CD8-positive, alpha-beta T cell (primary cell): ENCODE measurements at regions of chr13 and their contacts with region 1.

Region 1: DNA sequence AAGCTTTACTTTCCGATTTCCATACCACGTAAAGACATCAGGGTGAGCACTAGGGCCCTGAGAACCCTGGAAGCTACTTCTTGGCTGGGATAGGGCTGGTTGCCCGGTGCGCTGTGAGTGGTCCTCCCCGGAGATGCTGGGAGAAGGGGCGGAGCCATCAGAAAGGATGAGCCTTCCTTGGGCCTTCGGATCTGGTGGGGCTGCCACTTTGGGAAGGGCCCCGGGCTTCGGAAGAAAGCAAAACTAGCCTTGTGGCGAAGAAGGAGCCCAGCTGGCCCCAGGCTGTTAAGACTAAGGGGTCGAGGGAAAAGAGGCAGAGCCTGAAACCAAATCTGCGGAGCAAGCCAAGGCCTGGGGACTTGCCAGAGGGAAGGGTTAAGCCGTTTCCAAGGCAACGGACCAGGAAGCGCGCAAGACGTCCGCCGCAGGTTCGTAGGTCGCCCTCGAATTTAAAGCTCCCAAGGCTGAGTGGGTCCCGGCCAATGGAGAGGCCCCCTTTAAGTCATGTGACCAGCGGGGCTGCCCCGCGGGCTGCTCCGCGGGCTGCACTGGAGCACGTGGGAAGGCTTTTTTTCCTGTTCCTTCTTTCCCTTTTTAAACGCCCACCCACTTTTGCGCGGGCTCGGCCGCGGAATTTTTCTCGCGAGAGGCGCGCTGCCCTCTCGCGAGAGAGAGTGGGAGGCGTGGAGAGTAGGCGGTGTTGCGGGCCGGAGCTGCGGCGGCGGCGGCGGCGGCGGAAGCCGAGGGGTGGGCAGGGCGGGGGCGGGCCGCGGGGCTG is 426 bp upstream of the AKAP11 start:
- DNase-seq: peak; percentile 83 to 99 (median 91)
- ATAC-seq: peak; percentile 86
- H3K4me3 ChIP-seq: peak overlapping the region; percentile 63 to 78
- H3K4me3 Mint-ChIP-seq: peak overlapping the region; percentile 97
- H3K27ac ChIP-seq: peak overlapping the region; percentile 89 to 94
- H3K27ac Mint-ChIP-seq: peak overlapping the region; percentile 96
- H3K4me1 ChIP-seq: peaks cover 31% of the 10 kb centered on the region
- H3K4me1 Mint-ChIP-seq: peaks cover 49% of the 10 kb centered on the region
- H3K27me3 ChIP-seq: no peaks in the 10 kb centered on the region
- H3K27me3 Mint-ChIP-seq: no peaks in the 10 kb centered on the region
- CTCF ChIP-seq: no peak

Region 2: GRCh38 chr13:40777166-40777808 is 1494.2 kb before region 1 on chr13:
- CTCF ChIA-PET with region 1: no interaction called
- POLR2A ChIA-PET with region 1: no interaction called
- intact Hi-C with region 1: loop called (anchors 5 to 10 kb)
- DNase-seq: peak in 8 of 9 experiments; percentile 18 to 77 (median 36)
- ATAC-seq: no peak
- H3K4me3 ChIP-seq: peak overlapping the region in 1 of 2 experiments; percentile 17
- H3K4me3 Mint-ChIP-seq: peak overlapping the region; percentile 76
- H3K27ac ChIP-seq: peak overlapping the region; percentile 25 to 84
- H3K27ac Mint-ChIP-seq: peak overlapping the region; percentile 97
- H3K4me1 ChIP-seq: peaks cover 24% of the 10 kb centered on the region
- H3K4me1 Mint-ChIP-seq: peaks cover 30% of the 10 kb centered on the region
- H3K27me3 ChIP-seq: no peaks in the 10 kb centered on the region
- H3K27me3 Mint-ChIP-seq: no peaks in the 10 kb centered on the region
- CTCF ChIP-seq: peak; percentile 59

Region 3: DNA sequence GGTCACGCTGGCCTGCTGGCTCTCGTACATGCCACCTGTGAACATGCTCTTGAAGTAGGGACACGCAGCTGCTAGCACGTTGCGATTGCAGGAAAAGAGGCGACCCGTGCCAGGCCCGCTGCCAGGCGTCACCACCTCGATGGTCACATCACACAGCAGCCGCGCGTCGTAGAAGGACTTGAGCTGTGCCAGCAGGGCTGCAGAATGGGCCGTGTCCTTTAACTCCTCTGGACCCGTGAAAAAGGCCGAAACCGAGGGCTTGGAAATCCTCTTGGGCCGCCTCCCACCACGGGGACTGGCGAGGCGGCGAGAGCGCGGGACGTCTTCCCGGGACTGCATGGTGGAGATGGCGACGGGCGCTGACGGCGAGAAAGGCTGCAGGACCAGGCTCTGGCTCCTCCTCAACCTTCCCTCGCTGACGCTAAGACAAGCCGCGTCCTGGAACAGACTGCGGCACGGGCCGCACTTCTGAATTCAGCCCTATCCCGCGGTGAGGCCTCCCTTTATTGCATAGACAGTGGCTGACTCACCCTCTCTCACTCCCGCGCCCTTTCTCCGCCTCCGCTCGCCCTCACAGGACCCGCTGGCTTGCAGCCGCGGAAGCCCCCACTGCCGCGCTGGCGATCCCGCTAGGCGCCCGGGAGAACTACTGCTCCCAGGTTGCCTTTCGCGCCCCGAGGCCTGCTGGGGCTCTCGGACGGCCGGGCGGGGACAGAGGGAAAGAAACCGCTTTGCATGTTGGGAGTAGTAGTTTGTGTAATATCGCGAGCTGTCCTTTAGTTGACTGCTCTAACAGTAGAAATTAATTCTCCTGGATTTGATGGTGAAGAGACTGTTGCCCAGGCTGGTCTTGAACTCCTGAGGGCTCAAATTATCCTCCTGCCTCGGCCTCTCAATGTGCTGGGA is 1077.4 kb before region 1 on chr13 and contains the start of gene KBTBD7:
- CTCF ChIA-PET with region 1: no interaction called
- POLR2A ChIA-PET with region 1: no interaction called
- intact Hi-C with region 1: loop called (anchors 1 to 5 kb)
- DNase-seq: peak; percentile 74 to 93 (median 90)
- ATAC-seq: peak; percentile 95
- H3K4me3 ChIP-seq: peak within 1 kb of the TSS; percentile 67 to 97
- H3K4me3 Mint-ChIP-seq: peak within 1 kb of the TSS; percentile 92
- H3K27ac ChIP-seq: peak within 1 kb of the TSS; percentile 53 to 68
- H3K27ac Mint-ChIP-seq: peak within 1 kb of the TSS; percentile 93
- H3K4me1 ChIP-seq: peaks cover 14% of the 10 kb centered on the region
- H3K4me1 Mint-ChIP-seq: peaks cover 39% of the 10 kb centered on the region
- H3K27me3 ChIP-seq: no peaks in the 10 kb centered on the region
- H3K27me3 Mint-ChIP-seq: no peaks in the 10 kb centered on the region
- CTCF ChIP-seq: no peak
- total RNA-seq, gene KBTBD7: 2.2 to 2.3 TPM

Region 4: DNA sequence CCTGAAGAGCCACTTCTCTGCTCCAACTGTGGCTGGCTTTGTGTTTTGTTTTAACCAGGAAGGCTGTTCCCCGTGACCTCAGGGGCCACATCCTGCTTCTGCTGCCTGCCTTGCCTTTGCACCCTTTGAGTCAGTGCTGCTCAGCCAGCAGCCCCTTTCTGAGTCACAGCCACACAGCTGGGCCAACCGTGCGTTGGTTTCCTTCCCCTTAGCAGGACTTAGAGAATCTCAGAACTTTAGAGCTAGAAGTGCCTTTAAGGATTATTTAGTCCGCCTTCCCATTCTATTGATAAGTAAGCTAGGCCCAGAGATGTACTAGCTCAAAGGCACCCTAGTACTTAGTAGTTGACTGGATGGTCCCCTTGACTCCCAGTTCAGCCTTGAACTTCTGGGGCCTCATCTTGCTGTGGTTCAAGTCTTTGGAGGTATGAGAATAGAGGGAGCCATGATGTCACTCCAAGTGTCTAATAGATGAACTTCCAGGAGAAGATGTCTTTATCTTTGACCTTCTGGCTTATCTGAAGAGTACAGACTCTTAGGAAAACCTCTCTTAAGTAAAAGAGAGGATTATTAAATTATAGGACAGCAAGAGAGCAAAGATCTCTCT is 806.2 kb before region 1 on chr13:
- CTCF ChIA-PET with region 1: no interaction called
- POLR2A ChIA-PET with region 1: no interaction called
- intact Hi-C with region 1: loop called in 1 of 2 experiments (anchors 10 kb)
- DNase-seq: peak; percentile 75 to 95 (median 89)
- ATAC-seq: peak; percentile 72
- H3K4me3 ChIP-seq: peak overlapping the region in 1 of 2 experiments; percentile 6
- H3K4me3 Mint-ChIP-seq: peak overlapping the region; percentile 88
- H3K27ac ChIP-seq: peak overlapping the region; percentile 82 to 91
- H3K27ac Mint-ChIP-seq: peak overlapping the region; percentile 99
- H3K4me1 ChIP-seq: peaks cover 90% of the 10 kb centered on the region
- H3K4me1 Mint-ChIP-seq: peaks cover 92% of the 10 kb centered on the region
- H3K27me3 ChIP-seq: no peaks in the 10 kb centered on the region
- H3K27me3 Mint-ChIP-seq: no peaks in the 10 kb centered on the region
- CTCF ChIP-seq: no peak

Region 5: DNA sequence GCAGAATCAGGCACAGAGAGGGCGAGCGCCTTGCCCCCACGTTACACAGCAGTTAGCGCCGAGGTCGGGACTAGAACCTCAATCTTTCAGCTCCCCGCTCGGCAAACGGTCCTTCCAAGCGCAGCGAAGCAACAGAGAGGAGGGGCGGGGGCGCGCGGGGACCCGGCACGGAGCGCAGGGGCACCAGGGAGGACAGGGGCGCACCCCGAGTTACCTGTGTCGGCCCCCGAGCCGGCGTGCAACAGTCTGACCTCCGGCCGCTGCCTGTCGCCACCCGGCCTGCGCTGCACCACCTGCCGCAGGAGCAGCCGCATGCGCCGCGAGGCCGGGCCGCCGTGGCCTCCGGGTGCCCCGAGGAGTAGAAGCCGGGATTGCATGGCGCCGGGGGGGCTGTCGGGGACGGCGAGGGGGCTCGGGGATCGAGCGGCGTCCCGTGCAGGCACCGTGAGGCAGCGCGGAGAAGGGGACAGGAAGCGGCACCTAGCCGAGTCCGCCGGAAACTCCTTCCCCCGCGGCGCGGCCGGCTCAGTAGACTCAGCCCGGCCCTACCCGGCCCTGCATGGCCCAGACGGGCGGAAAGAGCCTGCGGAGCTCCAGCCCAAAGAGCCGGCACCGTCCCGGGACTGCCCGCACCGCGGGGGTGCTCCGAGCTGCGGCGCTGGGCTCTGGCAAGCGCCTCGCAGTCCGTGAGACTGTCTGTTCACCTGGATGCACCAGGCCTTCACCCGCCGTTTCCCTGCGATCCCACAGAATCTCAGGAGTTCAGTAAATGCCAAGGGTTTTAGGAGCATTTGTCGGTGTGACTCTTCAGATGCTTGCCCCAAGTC is 310.7 kb before region 1 on chr13 and contains the start of gene VWA8:
- CTCF ChIA-PET with region 1: no interaction called
- POLR2A ChIA-PET with region 1: interaction called, 4 read pairs
- intact Hi-C with region 1: loop called (anchors 2 to 5 kb)
- DNase-seq: peak; percentile 71 to 93 (median 83)
- ATAC-seq: peak; percentile 95
- H3K4me3 ChIP-seq: peak within 1 kb of the TSS; percentile 63 to 67
- H3K4me3 Mint-ChIP-seq: peak within 1 kb of the TSS; percentile 93
- H3K27ac ChIP-seq: peak within 1 kb of the TSS; percentile 59 to 78
- H3K27ac Mint-ChIP-seq: peak within 1 kb of the TSS; percentile 97
- H3K4me1 ChIP-seq: peaks cover 31% of the 10 kb centered on the region
- H3K4me1 Mint-ChIP-seq: peaks cover 41% of the 10 kb centered on the region
- H3K27me3 ChIP-seq: peaks cover 0 to 3% of the 10 kb centered on the region in 2 experiments
- H3K27me3 Mint-ChIP-seq: peaks cover 2% of the 10 kb centered on the region
- CTCF ChIP-seq: no peak
- total RNA-seq, gene VWA8: 16.3 to 16.5 TPM

Region 6: DNA sequence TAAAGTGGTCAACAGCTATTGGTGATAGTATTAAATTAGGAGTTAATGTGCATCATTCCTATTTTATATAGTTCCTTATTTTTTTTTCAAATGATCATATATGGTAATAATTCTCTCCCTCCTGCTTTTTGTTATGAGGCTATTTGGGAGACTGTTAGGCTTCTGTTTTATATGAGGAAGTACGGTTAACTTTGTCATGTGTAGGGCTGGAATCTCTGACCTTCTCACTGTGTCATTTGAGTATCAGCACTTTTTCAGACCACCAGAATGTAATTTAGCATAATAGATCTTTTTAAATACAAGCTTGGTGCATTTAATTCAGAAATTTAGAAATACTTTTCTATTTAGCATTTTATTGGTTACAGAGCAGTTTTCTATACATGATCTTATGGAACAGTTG is 215.4 kb before region 1 on chr13:
- CTCF ChIA-PET with region 1: no interaction called
- POLR2A ChIA-PET with region 1: no interaction called
- intact Hi-C with region 1: loop called in 1 of 2 experiments (anchors 10 kb)
- DNase-seq: no peak
- ATAC-seq: no peak
- H3K4me3 ChIP-seq: no peak overlapping the region
- H3K4me3 Mint-ChIP-seq: no peak overlapping the region
- H3K27ac ChIP-seq: no peak overlapping the region
- H3K27ac Mint-ChIP-seq: no peak overlapping the region
- H3K4me1 ChIP-seq: no peaks in the 10 kb centered on the region
- H3K4me1 Mint-ChIP-seq: peaks cover 18% of the 10 kb centered on the region
- H3K27me3 ChIP-seq: no peaks in the 10 kb centered on the region
- H3K27me3 Mint-ChIP-seq: no peaks in the 10 kb centered on the region
- CTCF ChIP-seq: no peak